GM23248 (cell line): ENCODE measurements at regions of chr15 and their contacts with region 1.

Region 1: DNA sequence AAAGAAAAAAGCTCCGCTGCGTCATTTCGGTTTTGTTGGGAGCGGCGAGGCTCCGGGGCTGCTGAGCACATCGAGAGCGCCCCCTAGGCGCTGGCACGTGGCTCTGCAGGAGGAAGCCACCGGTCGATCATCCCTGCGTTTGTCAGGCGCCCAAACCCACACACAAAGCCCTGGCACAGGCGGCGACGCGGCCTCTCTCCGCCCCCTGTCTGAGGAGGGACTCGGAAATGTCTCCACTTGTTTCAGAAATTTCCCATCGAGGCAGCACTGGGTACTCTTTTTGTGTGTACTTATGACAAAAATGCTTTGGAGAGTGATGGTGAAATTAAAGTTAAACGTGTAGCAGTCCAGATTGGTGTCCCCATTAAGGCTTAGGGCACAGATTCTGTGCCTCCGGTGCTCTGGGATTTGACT is 407.3 kb upstream of the ONECUT1 start:
- DNase-seq: peak; percentile 75
- H3K4me3 ChIP-seq: peak overlapping the region; percentile 28; the same call in 1 of the 2 replicates
- H3K27ac ChIP-seq: no peak overlapping the region
- H3K4me1 ChIP-seq: no peaks in the 10 kb centered on the region
- H3K27me3 ChIP-seq: no peaks in the 10 kb centered on the region

Region 2: DNA sequence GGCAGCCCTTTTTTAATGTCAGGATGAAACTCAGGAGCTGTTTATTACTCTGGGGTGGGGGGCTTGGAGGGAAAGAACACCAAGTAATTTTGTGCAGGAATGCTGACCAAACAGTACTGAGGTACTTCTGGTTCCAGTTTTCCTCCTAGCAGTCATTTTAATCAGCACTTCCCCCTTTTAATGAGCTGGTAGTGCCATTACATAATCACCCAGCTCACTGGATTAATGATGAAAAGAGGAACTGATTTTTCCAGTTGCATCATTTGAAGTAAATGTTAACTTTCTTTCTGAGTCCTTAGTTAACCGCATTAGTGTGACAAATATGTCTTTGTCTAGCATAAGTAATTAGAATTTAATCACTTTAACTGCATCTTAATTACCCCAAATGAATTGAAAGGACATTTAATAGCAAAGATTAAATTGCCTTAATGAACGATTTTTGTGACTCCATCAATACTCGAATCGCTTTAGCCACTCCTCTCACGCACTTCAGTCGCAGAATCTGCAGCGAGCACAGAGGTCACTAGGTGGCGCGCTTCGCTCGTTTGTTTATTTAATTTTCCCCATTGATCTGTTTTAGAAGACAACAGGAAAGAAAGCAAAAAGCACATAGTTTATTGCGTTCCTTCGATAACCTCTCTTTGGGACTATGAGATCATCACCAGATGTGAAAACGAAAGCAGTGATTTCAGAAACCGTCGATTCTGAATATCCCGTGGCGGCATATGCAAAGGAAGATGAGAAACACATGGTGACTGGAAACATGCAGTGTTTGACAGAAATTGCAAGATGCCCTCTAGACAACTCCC is 417.1 kb before region 1 on chr15:
- in situ Hi-C with region 1: loop called (anchors 25 kb)
- DNase-seq: peak; percentile 71
- H3K4me3 ChIP-seq: peak overlapping the region; percentile 44
- H3K27ac ChIP-seq: no peak overlapping the region
- H3K4me1 ChIP-seq: no peaks in the 10 kb centered on the region
- H3K27me3 ChIP-seq: peaks cover 80% of the 10 kb centered on the region